ENCODE measurements at regions of chr17 and their contacts with region 1.

Region 1: GRCh38 chr17:66165513-66166123 is 26.3 kb downstream of the CEP112 start:
- DNase-seq: peak in 4 of 14 experiments; percentile 29 to 74 (median 66)
- ATAC-seq: no peak
- H3K4me3 ChIP-seq: no peak overlapping the region
- H3K4me3 Mint-ChIP-seq: no peak overlapping the region
- H3K27ac ChIP-seq: no peak overlapping the region
- H3K27ac Mint-ChIP-seq: no peak overlapping the region
- H3K4me1 ChIP-seq: no peaks in the 10 kb centered on the region
- H3K4me1 Mint-ChIP-seq: peaks cover 10% of the 10 kb centered on the region
- H3K27me3 ChIP-seq: no peaks in the 10 kb centered on the region
- H3K27me3 Mint-ChIP-seq: no peaks in the 10 kb centered on the region
- CTCF ChIP-seq: peak; percentile 86

Region 2: GRCh38 chr17:64920026-64920418 is 1245.6 kb before region 1 on chr17:
- CTCF ChIA-PET with region 1: no interaction called
- POLR2A ChIA-PET with region 1: no interaction called
- intact Hi-C with region 1: loop called in 1 of 2 experiments (anchors 10 kb)
- DNase-seq: peak in 2 of 14 experiments; percentile 14 to 39
- ATAC-seq: no peak
- H3K4me3 ChIP-seq: peak overlapping the region; percentile 60
- H3K4me3 Mint-ChIP-seq: peak overlapping the region; percentile 91
- H3K27ac ChIP-seq: peak overlapping the region in 1 of 2 donors; percentile 65
- H3K27ac Mint-ChIP-seq: peak overlapping the region; percentile 83
- H3K4me1 ChIP-seq: peaks cover 13% of the 10 kb centered on the region
- H3K4me1 Mint-ChIP-seq: no peaks in the 10 kb centered on the region
- H3K27me3 ChIP-seq: no peaks in the 10 kb centered on the region
- H3K27me3 Mint-ChIP-seq: no peaks in the 10 kb centered on the region
- CTCF ChIP-seq: no peak

Region 3: DNA sequence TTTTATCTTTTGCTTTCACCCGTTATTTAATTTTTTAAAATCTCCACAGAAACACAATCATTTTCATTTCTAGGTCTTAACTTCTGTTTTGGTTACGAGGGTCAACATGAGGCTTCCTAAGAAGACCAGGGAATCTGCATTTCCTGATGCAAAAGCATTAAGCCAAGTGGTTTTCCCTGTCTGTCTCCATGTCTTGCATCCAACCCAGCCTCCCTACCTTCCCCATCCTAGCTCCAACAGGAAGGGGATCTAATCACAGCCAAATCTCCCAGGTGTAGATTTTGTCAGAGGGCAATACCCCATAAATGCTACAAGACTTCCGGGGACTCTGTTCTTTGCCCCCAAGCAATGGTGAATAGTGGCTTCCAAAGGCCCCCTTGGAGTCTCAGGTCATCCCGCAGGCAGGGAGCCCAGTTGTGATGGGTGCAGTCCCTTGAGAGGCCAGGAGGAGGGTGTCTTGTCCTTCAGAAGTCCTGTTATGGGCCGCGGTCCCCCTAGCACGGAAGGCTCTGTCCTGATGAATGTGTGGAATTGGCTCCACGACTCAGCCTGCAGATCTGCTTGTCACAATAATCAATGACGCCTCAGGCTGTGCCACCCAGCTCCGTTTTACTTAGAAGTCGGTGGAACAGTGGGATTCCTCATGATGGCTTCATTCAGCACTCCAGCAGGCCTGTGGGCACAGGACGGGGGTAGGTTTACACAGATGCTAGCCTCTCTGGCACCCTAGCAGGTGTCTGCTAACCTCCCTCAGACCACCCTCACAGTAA is 887.4 kb before region 1 on chr17:
- CTCF ChIA-PET with region 1: interaction called, 3 read pairs
- POLR2A ChIA-PET with region 1: no interaction called
- intact Hi-C with region 1: loop called (anchors 1 to 5 kb)
- DNase-seq: peak in 8 of 14 experiments; percentile 1 to 42 (median 4)
- ATAC-seq: no peak
- H3K4me3 ChIP-seq: no peak overlapping the region
- H3K4me3 Mint-ChIP-seq: no peak overlapping the region
- H3K27ac ChIP-seq: no peak overlapping the region
- H3K27ac Mint-ChIP-seq: no peak overlapping the region
- H3K4me1 ChIP-seq: no peaks in the 10 kb centered on the region
- H3K4me1 Mint-ChIP-seq: peaks cover 12% of the 10 kb centered on the region
- H3K27me3 ChIP-seq: no peaks in the 10 kb centered on the region
- H3K27me3 Mint-ChIP-seq: peaks cover 19% of the 10 kb centered on the region
- CTCF ChIP-seq: peak; percentile 14

Region 4: GRCh38 chr17:65418628-65419027 is 747.0 kb before region 1 on chr17:
- CTCF ChIA-PET with region 1: no interaction called
- POLR2A ChIA-PET with region 1: no interaction called
- intact Hi-C with region 1: loop called in 1 of 2 experiments (anchors 10 kb)
- DNase-seq: no peak
- ATAC-seq: no peak
- H3K4me3 ChIP-seq: no peak overlapping the region
- H3K4me3 Mint-ChIP-seq: no peak overlapping the region
- H3K27ac ChIP-seq: no peak overlapping the region
- H3K27ac Mint-ChIP-seq: no peak overlapping the region
- H3K4me1 ChIP-seq: no peaks in the 10 kb centered on the region
- H3K4me1 Mint-ChIP-seq: no peaks in the 10 kb centered on the region
- H3K27me3 ChIP-seq: no peaks in the 10 kb centered on the region
- H3K27me3 Mint-ChIP-seq: peaks cover 11% of the 10 kb centered on the region
- CTCF ChIP-seq: no peak

Region 5: DNA sequence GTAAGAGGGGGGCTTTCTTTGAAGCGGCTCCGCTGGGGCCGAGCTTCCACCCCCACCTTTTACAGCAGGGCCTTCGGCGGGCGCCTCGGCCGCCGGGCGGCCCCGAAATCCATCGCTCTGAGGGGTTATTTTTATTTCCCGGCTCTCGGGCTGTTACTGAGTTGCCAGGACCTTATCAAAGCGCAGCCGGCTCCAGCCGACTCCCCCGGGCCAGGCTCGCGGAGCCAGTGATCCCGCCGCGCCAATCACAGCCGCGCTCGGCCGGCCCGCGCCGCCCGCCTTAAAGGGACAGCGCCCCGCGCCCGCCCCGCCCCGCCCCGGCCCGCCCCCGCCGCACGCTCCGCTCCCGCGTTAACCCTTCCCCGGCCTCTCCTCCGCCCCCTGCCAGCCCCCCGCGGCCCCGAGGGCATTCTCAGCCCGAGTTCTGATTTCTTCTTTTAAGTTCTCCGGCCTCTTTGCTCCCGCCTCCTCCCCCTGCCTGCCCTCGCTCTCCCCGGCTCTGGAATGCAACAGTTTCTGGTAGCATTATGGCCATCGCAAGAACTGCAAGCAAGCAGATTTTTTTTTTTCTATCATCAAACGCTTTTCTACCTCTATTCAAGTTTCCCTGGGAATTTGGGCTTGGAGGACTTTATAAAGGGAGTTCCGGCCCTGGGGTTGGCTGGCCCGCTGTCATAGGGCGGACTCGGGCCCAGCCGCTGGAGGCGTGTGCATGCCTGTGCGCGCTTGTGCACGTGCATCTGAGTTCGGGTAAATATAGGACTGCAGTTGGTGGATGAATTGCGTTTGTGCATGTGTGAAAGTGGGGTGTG is 604.0 kb before region 1 on chr17 and contains the start of gene AXIN2:
- CTCF ChIA-PET with region 1: no interaction called
- POLR2A ChIA-PET with region 1: no interaction called
- intact Hi-C with region 1: loop called in 1 of 2 experiments (anchors 5 kb)
- DNase-seq: peak; percentile 77 to 93 (median 87)
- ATAC-seq: peak; percentile 75
- H3K4me3 ChIP-seq: peak within 1 kb of the TSS; percentile 66
- H3K4me3 Mint-ChIP-seq: peak within 1 kb of the TSS; percentile 94
- H3K27ac ChIP-seq: peak within 1 kb of the TSS; percentile 78 to 80
- H3K27ac Mint-ChIP-seq: peak within 1 kb of the TSS; percentile 92
- H3K4me1 ChIP-seq: peaks cover 21% of the 10 kb centered on the region
- H3K4me1 Mint-ChIP-seq: peaks cover 42% of the 10 kb centered on the region
- H3K27me3 ChIP-seq: no peaks in the 10 kb centered on the region
- H3K27me3 Mint-ChIP-seq: no peaks in the 10 kb centered on the region
- CTCF ChIP-seq: no peak
- total RNA-seq, gene AXIN2: 47.9 to 49.8 TPM